ENCODE measurements at regions of chr4 and their contacts with region 1.

Region 1: DNA sequence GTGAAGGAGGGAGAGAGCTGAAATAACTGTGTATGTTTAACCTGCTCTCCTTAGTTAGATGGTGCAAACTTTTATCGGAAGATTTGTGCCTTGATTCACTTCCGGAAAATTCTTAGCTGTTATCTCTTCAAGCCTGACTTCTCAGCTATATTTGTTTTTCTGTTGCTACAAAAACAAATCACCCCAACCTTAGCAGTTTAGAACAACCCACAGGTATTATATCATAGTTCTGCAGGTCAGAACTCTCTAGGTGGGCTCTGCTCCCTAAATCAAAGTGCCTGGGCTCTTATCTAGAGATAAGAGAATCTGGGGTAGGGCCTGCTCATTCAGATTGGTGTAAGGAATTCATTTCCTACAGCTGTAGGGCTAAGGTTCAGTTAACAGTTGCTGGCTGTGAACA is 15.1 kb upstream of the CEP135 start:
- DNase-seq: no peak
- ATAC-seq: no peak
- H3K4me3 ChIP-seq: no peak overlapping the region
- H3K27ac ChIP-seq: no peak overlapping the region
- H3K4me1 ChIP-seq: no peaks in the 10 kb centered on the region
- H3K27me3 ChIP-seq: no peaks in the 10 kb centered on the region
- CTCF ChIP-seq: no peak

Region 2: DNA sequence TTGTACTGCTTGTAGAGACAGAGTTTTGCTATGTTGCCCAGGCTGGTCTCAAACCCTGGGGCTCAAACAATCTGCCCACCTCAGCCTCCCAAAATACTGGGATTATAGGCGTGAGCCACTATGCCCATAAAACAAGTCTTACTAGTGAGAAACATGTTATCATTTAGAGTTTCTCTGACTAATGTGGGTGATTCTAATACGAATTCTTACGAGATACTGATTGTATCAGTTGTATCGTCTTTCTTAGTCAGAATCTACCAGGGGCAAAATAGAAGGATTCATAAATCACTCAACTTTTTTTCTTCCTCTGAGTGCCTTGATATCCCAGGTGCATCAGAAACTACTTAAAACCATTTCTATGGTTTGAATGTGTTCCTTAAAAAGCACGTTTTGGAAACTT is 283.1 kb before region 1 on chr4:
- CTCF ChIA-PET with region 1: no interaction called
- POLR2A ChIA-PET with region 1: interaction called, 16 read pairs
- in situ Hi-C with region 1: no loop called
- intact Hi-C with region 1: no loop called
- DNase-seq: no peak
- ATAC-seq: no peak
- H3K4me3 ChIP-seq: no peak overlapping the region
- H3K27ac ChIP-seq: no peak overlapping the region
- H3K4me1 ChIP-seq: no peaks in the 10 kb centered on the region
- H3K27me3 ChIP-seq: no peaks in the 10 kb centered on the region
- CTCF ChIP-seq: no peak

Region 3: GRCh38 chr4:55682295-55682694 is 251.3 kb before region 1 on chr4:
- CTCF ChIA-PET with region 1: no interaction called
- POLR2A ChIA-PET with region 1: no interaction called
- in situ Hi-C with region 1: no loop called
- intact Hi-C with region 1: no loop called
- DNase-seq: no peak
- ATAC-seq: no peak
- H3K4me3 ChIP-seq: no peak overlapping the region
- H3K27ac ChIP-seq: no peak overlapping the region
- H3K4me1 ChIP-seq: no peaks in the 10 kb centered on the region
- H3K27me3 ChIP-seq: no peaks in the 10 kb centered on the region
- CTCF ChIP-seq: no peak

Region 4: DNA sequence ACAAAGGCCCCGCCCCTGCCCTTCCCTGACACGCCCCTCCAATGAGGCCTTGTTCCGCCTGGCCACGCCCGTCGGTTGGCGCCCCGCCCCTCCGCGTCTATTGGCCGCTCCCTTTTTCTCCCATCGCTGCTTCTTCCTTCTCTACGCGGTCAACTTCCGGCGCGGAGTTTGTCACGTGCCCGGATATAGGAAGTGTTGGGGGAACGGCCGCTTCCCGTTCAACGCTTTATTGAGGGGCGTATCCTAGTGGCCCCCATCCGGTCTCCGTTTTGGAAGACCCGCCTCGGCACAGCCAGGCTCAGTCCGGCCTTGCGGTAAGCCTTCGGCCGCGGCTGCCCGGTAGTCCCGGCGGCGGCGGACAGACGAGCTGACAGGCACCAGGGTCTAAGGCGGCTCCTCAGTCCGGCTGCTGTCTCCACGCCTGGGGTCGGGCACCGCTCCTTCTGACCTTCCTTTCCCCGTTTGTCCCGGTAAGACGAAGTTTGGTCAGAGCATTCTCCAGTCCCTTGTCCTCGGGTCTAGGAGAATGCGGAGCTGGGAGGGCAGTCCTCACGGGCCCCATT is 80.0 kb before region 1 on chr4 and contains the start of gene EXOC1:
- CTCF ChIA-PET with region 1: no interaction called
- POLR2A ChIA-PET with region 1: no interaction called
- in situ Hi-C with region 1: no loop called
- intact Hi-C with region 1: no loop called
- DNase-seq: peak; percentile 58
- ATAC-seq: peak; percentile 99
- H3K4me3 ChIP-seq: peak within 1 kb of the TSS; percentile 91 to 92
- H3K27ac ChIP-seq: peak within 1 kb of the TSS; percentile 87
- H3K4me1 ChIP-seq: peaks cover 5% of the 10 kb centered on the region
- H3K27me3 ChIP-seq: no peaks in the 10 kb centered on the region
- CTCF ChIP-seq: no peak
- total RNA-seq, gene EXOC1: 24.1 TPM

Region 5: GRCh38 chr4:55866973-55867574 is 66.5 kb before region 1 on chr4:
- CTCF ChIA-PET with region 1: no interaction called
- POLR2A ChIA-PET with region 1: no interaction called
- in situ Hi-C with region 1: no loop called
- intact Hi-C with region 1: no loop called
- DNase-seq: no peak
- ATAC-seq: peak; percentile 80; the same call in 1 of the 2 replicates
- H3K4me3 ChIP-seq: no peak overlapping the region
- H3K27ac ChIP-seq: no peak overlapping the region
- H3K4me1 ChIP-seq: no peaks in the 10 kb centered on the region; the same call in 1 of the 2 replicates
- H3K27me3 ChIP-seq: no peaks in the 10 kb centered on the region
- CTCF ChIP-seq: peak; percentile 77; the same call in 1 of the 2 replicates